Dorsolateral prefrontal cortex (tissue), 120 donors: ENCODE measurements at regions of chr15 and their contacts with region 1.

Region 1: DNA sequence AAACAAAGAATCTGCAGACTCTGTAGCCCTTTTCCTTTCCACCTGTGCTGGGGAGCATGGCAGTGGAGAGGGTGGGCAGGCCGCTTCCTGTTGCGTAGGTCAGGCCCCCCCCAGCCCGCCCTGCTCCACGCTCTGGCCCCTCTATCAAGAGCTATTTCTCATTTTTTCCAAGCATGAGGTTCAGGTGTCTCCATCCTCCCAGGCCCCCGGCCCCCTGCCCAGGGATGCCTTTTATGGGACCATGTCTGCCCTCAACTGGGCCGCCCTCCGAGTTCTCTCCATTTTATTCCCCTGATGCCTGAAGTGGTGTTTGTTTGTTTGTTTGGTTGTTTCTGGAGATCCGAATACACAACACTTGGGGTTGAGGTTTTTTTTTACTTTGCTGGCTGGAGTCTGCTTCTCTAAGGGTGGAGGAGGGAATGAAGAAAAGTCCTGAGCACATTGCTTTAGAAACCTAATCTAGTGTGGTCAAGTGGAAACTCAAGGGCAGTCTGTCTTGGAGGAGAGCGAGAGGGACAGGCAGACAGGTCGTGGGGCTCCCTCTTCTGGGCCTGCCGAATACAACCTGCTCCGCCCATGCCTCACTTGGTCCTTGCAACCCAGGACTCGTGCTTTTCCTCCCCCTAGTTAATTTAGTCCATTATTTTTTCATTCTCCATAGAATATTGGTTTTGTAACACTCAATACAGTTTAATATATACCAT is 176.5 kb upstream of the LYSMD4 start:
- DNase-seq: no peak
- H3K4me3 ChIP-seq: no peak overlapping the region
- H3K27ac ChIP-seq: no peak overlapping the region
- H3K27me3 ChIP-seq: no peaks in the 10 kb centered on the region
- CTCF ChIP-seq: peak in 1 of 56 donors; percentile 9

Region 2: DNA sequence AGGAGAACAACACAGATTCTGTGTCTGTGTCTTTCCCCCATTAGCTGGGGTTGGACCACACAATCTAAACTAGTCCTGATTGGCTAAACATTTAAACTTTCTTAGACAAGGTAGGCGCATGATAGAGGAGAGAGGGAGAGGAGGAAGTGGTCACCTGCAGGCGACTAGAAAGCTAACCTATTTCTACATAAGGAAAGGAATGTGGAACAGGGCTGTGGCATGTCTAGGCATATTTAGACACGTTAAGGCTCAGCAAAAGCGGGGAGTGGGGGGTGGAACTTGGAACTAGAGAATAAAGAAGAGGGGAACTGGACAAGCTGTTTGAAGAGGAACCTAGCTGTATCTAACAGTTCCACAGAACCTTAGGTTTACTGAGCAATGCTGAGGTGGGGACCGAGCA is 645.6 kb before region 1 on chr15:
- intact Hi-C with region 1: loop called in 1 of 2 experiments (anchors 10 kb)
- DNase-seq: no peak
- H3K4me3 ChIP-seq: no peak overlapping the region
- H3K27ac ChIP-seq: no peak overlapping the region
- H3K27me3 ChIP-seq: no peaks in the 10 kb centered on the region
- CTCF ChIP-seq: no peak

Region 3: DNA sequence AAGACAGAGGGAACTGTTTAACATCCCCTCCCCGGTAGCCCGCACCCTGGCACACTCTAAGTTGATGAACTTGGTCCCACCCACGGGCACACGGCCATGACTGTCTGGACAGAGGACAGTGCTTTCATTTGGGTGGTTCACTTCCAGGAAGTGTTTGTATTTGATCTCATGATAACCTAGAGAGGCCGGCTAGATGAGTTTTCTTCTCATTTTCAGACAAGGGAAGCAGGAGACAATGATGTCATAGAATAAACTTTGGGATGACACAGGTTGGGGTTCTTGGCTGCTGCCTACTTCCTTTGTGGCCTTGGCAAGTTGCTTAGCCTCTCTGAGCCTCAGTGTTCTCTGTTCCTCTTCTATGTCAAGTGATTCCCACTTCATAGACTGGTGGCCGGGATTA is 160.4 kb before region 1 on chr15:
- intact Hi-C with region 1: loop called in 1 of 2 experiments (anchors 10 kb)
- DNase-seq: no peak
- H3K4me3 ChIP-seq: no peak overlapping the region
- H3K27ac ChIP-seq: no peak overlapping the region
- H3K27me3 ChIP-seq: no peaks in the 10 kb centered on the region
- CTCF ChIP-seq: no peak